Activated CD4-positive, alpha-beta T cell treated with anti-CD3 and anti-CD28 coated beads for 36 hours (primary cell): ENCODE measurements at regions of chr17 and their contacts with region 1.

Region 1: DNA sequence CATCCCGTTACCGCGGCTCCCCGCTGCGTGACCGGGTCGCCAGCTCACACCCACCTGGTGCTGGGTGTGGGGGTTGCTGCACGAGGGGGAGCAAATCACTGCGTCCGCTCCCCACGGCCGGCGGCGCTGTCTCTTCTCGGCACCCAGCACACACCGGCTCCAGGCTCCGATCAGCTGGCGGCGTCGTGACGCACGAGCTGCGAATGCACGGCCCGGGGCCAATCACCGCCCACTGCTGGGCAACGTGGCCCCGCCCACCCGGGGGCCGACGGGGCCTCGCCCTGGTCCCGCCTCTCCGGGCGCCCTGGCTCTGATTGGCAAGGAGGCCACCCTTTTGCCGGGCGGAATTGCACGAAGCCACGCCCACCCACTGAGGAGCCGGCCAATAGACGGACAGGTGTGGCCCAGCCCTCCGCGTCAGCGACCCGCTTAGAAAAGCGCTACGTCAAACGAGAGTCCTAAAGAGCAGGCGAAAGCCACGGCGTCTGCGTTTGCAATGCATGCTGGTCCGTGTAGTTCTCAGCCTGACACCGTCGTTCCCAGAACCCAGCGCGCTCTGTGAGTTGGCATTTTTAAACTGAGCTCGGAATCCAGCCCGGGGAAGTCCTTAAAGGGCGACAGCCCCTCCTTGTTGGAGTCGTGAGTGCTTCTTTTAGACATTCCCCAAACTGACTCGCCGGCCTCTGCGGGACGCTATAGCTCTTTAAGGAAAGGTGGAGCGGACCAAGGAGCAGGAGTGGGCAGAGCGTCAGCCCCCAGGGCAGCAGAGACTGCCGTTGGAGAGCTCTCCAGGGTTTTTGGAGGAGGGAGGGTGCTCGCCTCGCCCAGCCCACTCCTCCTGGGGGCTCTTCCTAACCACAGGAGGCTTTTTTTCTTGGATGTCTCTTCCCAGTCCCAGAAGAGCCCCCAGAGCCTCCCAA is 6.2 kb upstream of the TLCD2 start:
- DNase-seq: peak; percentile 100
- ATAC-seq: peak; percentile 89
- H3K4me3 Mint-ChIP-seq: peak overlapping the region; percentile 86
- H3K27ac Mint-ChIP-seq: peak overlapping the region; percentile 97
- H3K4me1 Mint-ChIP-seq: peaks cover 23% of the 10 kb centered on the region
- H3K27me3 Mint-ChIP-seq: peaks cover 4% of the 10 kb centered on the region

Region 2: DNA sequence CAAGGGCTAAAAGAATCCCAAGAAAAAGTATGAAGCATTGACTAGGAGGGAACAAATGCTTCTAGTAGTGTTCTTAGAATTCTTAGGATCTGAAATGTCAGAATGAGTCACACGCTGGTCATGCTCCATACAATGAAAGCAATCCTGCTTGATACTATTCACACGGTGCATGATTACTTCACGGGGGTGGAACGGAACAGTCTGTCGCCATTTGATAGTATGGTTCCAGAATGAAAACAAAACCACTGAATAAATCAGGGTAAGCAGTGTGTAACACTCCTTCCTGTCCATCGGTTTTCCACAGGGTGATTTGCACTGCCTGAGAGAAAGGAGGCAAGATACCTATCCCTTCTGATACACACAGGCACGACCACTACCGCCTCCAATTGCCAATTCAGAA is 293.4 kb before region 1 on chr17:
- CTCF ChIA-PET with region 1: no interaction called
- POLR2A ChIA-PET with region 1: no interaction called
- intact Hi-C with region 1: no loop called
- DNase-seq: peak; percentile 41
- ATAC-seq: peak; percentile 86
- H3K4me3 Mint-ChIP-seq: no peak overlapping the region
- H3K27ac Mint-ChIP-seq: peak overlapping the region; percentile 40
- H3K4me1 Mint-ChIP-seq: peaks cover 17% of the 10 kb centered on the region
- H3K27me3 Mint-ChIP-seq: no peaks in the 10 kb centered on the region

Region 3: GRCh38 chr17:1455797-1456599 is 260.3 kb before region 1 on chr17 and contains the start of gene CRK:
- CTCF ChIA-PET with region 1: interaction called, 5 read pairs
- POLR2A ChIA-PET with region 1: no interaction called
- intact Hi-C with region 1: loop called in 1 of 2 experiments (anchors 1 kb)
- DNase-seq: peak; percentile 99
- ATAC-seq: peak; percentile 93
- H3K4me3 Mint-ChIP-seq: peak within 1 kb of the TSS; percentile 82
- H3K27ac Mint-ChIP-seq: peak within 1 kb of the TSS; percentile 89
- H3K4me1 Mint-ChIP-seq: peaks cover 46% of the 10 kb centered on the region
- H3K27me3 Mint-ChIP-seq: peaks cover 9% of the 10 kb centered on the region
- total RNA-seq, gene CRK: 10.1 to 11.6 TPM

Region 4: DNA sequence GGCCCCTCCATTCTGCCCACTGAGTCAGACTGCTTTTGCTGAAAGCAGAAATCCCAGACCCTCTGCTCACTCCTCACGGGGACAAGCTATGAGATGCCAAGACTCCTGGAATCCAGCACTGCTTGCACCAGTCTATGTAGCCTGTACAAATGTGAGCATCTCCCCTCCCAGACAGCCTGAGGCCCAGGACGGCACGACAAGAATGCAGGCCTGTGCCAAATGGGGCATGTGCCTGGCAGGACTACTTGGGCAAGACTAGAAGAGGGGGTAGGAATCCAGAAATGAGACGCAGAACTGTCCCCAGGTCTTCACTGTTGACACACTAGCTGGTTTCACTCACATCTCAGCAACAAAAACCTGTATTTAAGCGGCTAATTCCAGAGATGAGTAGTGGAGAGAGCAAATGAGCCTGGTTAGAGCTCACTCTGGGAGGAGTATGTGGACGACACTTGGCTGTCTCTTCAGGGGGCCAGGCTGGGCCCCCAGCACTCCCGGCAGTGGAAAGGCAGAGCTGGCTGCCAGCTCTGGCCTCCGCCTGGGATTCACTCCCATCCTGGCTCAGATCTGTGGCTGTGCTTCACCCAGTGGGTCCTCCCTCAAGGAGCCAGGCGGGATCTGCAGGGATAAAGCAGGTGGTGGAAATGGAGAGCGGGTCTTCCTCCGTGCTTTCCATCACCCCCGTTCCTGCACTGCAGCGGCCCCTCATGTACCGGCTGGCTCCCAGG is 220.9 kb before region 1 on chr17:
- CTCF ChIA-PET with region 1: no interaction called
- POLR2A ChIA-PET with region 1: no interaction called
- intact Hi-C with region 1: no loop called
- DNase-seq: no peak
- ATAC-seq: no peak
- H3K4me3 Mint-ChIP-seq: no peak overlapping the region
- H3K27ac Mint-ChIP-seq: no peak overlapping the region
- H3K4me1 Mint-ChIP-seq: peaks cover 12% of the 10 kb centered on the region
- H3K27me3 Mint-ChIP-seq: no peaks in the 10 kb centered on the region

Region 5: DNA sequence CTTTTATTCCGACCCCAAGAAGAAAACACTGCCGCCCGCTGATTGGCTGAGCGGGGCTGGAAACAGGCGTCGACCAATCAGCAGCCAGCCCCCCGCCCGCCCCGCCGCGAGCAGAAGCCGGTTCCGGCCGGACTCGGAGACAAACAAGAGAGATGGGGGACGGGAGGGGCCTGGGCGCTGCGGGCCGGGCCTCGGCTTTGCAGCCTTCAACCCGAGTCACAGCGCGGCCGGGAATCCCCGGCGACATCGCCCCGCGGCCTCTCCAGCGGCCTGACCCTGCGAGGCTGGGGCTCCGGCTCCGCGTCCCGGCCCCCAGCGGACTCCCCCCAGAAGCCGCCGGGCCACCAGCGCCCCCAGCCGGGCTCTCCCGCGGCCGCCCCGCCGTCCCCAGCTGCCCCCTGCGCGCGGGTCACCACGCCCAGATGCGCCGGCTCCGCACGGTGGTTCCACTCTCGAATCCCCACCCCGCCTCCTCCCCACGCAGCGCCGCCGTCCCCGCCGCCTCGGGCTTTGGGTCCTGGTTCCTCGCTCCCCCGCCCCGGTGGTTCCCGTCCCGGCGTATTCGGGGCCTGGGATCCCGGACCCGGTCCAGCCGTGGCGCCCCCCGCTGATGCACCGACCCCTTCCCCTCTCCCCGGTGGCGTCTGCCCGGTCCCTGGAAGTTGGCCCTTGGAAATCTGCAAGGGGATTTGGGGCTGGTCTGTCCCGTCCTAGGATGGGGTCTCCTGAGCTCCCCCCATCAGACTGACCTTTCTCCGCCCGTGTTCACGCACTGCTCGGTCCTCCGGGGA is 87.3 kb before region 1 on chr17:
- CTCF ChIA-PET with region 1: interaction called, 3 read pairs
- POLR2A ChIA-PET with region 1: no interaction called
- intact Hi-C with region 1: loop called (anchors 1 kb)
- DNase-seq: peak; percentile 93
- ATAC-seq: peak; percentile 80
- H3K4me3 Mint-ChIP-seq: peak overlapping the region; percentile 76
- H3K27ac Mint-ChIP-seq: peak overlapping the region; percentile 56
- H3K4me1 Mint-ChIP-seq: peaks cover 7% of the 10 kb centered on the region
- H3K27me3 Mint-ChIP-seq: peaks cover 12% of the 10 kb centered on the region

Region 6: DNA sequence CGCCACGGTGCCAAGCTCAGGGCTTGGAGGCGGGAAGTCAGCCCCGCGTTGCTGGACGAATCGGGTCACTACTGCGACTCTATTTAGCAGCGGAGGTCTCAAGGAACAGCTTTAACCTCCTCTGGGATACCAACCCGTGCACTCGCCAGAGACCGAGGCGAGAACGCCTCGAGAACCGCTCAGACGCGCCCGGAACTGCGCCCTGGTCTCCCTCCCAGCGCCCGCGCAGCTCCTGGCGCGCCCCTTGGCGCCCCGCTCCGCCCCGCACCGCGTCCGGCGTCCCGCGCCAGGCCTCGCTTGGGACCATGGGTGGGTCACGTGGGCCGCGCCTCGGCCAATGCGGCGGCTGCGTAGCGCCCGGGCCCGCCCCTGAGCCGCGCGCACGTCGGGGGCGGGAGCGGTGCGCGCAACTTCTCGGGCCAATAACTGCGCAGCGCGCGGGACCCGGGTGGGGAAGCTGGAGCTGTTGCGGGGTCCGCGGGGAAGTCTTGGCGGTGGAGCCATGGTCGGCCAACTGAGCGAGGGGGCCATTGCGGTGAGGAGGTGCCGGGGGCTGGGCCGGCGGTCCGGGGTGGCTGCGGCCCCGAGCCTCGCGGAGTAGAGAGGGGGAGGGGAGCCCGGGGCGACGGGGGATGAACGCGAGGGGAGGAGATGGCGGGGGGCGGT is 113.4 kb after region 1 on chr17 and contains the starts of genes RPA1 and SMYD4:
- CTCF ChIA-PET with region 1: interaction called, 4 read pairs
- POLR2A ChIA-PET with region 1: interaction called, 12 read pairs
- intact Hi-C with region 1: loop called (anchors 1 to 2 kb)
- DNase-seq: peak; percentile 95
- ATAC-seq: peak; percentile 98
- H3K4me3 Mint-ChIP-seq: peak within 1 kb of the TSS; percentile 98
- H3K27ac Mint-ChIP-seq: peak within 1 kb of the TSS; percentile 93
- H3K4me1 Mint-ChIP-seq: peaks cover 59% of the 10 kb centered on the region
- H3K27me3 Mint-ChIP-seq: no peaks in the 10 kb centered on the region
- total RNA-seq, gene RPA1: 134 to 191 TPM
- total RNA-seq, gene SMYD4: 19.7 to 19.8 TPM

Region 7: GRCh38 chr17:2049333-2050299 is 333.3 kb after region 1 on chr17:
- CTCF ChIA-PET with region 1: no interaction called
- POLR2A ChIA-PET with region 1: no interaction called
- intact Hi-C with region 1: loop called (anchors 1 to 5 kb)
- DNase-seq: peak; percentile 92
- ATAC-seq: peak; percentile 31
- H3K4me3 Mint-ChIP-seq: peak overlapping the region; percentile 72
- H3K27ac Mint-ChIP-seq: no peak overlapping the region
- H3K4me1 Mint-ChIP-seq: peaks cover 29% of the 10 kb centered on the region
- H3K27me3 Mint-ChIP-seq: peaks cover 11% of the 10 kb centered on the region

Region 8: DNA sequence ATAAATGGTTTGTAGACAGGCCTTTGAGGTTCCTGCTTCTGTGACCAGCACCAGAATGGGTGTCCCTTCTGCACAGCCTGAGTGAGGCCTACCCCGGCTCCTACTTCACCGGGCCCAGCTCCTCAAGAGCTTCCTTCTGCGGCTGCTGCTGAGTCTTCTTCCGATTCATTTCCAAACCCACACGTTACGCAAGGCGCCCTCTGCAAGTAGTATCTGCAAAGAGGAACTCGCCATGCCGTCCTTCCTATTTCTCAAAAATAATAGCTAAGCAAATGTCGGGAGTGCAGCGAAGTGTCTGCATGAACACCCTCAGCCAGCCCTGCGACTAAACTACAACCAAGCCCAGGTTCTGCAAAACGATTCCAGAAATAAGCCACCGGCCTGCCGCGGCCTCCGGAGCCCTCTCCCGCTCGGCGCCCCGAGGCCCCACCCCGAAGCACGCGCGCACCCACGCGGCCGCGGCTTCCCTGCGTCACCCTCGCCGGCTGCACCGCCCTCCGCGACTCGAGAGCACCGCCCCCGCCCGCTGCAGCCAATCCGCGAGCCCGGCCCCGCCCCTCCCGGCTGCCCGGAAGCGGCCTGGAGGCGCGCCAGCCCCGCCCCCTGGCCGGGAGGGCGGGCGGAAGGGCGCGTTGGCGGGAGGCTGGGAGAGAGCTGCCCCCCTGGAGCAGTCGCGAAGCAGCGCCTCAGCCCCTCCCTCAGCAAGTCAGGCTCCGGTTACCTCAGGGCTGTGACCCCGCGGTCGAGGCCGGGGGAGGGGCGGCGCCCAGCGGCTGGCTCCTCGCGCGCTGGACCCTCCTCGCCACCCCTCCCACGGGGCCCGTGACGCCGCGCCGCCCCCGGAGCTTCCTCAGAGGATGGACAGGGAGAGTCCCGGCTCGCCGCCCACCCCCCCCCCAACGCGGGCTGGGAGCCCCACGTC is 676.2 kb after region 1 on chr17:
- CTCF ChIA-PET with region 1: no interaction called
- POLR2A ChIA-PET with region 1: no interaction called
- intact Hi-C with region 1: loop called in 1 of 2 experiments (anchors 1 kb)
- DNase-seq: peak; percentile 99
- ATAC-seq: peak; percentile 72
- H3K4me3 Mint-ChIP-seq: peak overlapping the region; percentile 80
- H3K27ac Mint-ChIP-seq: peak overlapping the region; percentile 94
- H3K4me1 Mint-ChIP-seq: peaks cover 52% of the 10 kb centered on the region
- H3K27me3 Mint-ChIP-seq: no peaks in the 10 kb centered on the region